ENCODE measurements at regions of chr11 and their contacts with region 1.

Region 1: GRCh38 chr11:47552566-47553416 is at the start of gene CELF1:
- DNase-seq: peak; percentile 91 to 92
- ATAC-seq: peak; percentile 98 to 100 (median 98)
- H3K4me3 ChIP-seq: peak within 1 kb of the TSS; percentile 83 to 99 (median 94)
- H3K27ac ChIP-seq: peak within 1 kb of the TSS; percentile 82 to 97 (median 94)
- H3K4me1 ChIP-seq: peaks cover 4 to 48% (median 42%) of the 10 kb centered on the region in 9 donors
- H3K27me3 ChIP-seq: no peaks in the 10 kb centered on the region
- CTCF ChIP-seq: peak; percentile 84 to 99 (median 94)
- total RNA-seq, gene CELF1: 68.3 to 97.0 (median 87.7) TPM

Region 2: DNA sequence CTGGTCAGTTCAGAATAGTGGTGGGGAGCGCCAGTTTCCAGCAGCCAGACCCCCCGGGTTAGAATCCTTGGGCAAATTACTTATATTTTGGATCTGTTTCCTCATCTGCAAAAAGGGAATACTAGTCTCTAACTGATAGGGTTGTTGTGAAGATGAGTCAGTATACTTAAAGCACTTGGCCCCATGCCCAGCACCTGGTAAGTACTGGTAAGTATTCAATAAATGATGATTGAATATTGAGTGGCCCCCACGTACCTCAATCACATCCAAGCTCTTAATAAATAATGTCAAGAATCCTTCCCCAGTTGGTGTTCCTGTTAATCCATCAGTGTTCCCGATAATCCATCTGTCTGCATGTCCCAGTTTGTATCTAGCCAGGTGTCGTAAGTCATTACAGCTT is 316.3 kb before region 1 on chr11:
- intact Hi-C with region 1: no loop called
- DNase-seq: no peak
- ATAC-seq: no peak
- H3K4me3 ChIP-seq: no peak overlapping the region
- H3K27ac ChIP-seq: no peak overlapping the region
- H3K4me1 ChIP-seq: peaks cover 5 to 38% (median 23%) of the 10 kb centered on the region in 9 donors
- H3K27me3 ChIP-seq: no peaks in the 10 kb centered on the region
- CTCF ChIP-seq: no peak

Region 3: DNA sequence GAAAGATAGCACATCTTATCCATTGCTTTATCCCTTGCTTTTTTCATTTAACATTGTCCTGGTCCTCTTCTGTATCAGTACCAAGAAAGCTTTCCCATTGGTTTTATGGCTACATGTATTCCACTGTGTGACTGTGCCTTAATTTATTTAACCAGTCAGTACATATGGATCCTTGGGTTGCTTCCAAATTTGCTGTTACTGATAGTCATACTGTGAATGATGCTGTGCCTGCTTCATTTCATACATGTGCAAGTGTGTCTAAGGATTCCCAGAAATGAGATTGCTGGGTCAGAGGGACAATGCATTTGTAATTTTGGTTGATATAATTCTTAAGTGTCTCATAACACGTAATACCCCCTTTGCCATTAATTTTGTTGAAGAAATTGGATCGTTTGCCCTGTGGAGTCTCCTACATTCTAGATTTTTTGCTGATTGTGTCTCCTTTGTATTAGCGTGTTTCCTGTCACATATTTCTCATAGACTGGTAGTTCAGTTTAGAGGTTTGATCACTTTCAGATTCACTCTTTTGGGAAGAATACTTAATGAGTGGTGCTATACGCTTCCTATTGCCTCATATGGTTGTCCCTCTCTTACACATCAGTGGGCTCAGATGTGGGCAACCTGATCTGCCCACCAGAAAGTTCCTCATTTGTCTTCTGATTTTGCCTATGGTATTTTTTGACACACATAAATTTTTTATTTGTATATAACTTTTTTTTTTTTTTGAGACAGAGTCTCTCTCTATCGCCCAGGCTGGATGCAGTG is 235.5 kb before region 1 on chr11:
- intact Hi-C with region 1: no loop called
- DNase-seq: no peak
- ATAC-seq: no peak
- H3K4me3 ChIP-seq: no peak overlapping the region
- H3K27ac ChIP-seq: no peak overlapping the region
- H3K4me1 ChIP-seq: peaks cover 0 to 3% (median 0%) of the 10 kb centered on the region in 9 donors
- H3K27me3 ChIP-seq: no peaks in the 10 kb centered on the region
- CTCF ChIP-seq: no peak

Region 4: DNA sequence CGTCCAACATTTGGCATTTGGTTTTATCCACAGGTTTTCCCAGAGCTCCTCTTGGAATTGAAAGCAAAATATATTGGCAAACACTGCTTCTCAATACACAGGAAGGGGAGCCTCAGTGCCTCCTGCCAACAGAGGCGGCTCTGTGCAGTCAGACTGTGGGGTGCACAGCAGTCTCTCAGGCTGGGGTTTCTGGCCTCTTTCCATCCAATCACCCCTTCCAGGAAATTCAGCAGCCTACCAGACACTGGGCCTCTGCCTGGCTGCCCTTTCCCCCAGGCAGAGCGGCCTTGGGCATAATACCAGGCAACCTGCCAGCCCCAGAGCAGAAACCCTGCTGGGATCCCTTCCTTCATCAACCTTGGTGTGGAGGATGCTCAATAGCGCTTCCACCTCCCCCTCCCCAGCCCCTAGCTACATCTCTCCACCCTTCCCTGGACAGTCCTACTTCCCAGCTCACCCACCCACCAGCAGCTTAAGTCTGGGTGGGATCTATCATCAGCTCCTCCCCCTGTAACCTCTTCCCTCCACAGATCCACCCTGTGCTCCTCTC is 86.0 kb before region 1 on chr11:
- intact Hi-C with region 1: loop called in 2 of 10 experiments (anchors 5 kb)
- DNase-seq: peak; percentile 37 to 45
- ATAC-seq: peak; percentile 50 to 74 (median 70)
- H3K4me3 ChIP-seq: peak overlapping the region in 1 of 10 donors; percentile 27
- H3K27ac ChIP-seq: peak overlapping the region in 9 of 10 donors; percentile 28 to 79 (median 62)
- H3K4me1 ChIP-seq: peaks cover 6 to 52% (median 35%) of the 10 kb centered on the region in 9 donors
- H3K27me3 ChIP-seq: no peaks in the 10 kb centered on the region
- CTCF ChIP-seq: no peak

Region 5: DNA sequence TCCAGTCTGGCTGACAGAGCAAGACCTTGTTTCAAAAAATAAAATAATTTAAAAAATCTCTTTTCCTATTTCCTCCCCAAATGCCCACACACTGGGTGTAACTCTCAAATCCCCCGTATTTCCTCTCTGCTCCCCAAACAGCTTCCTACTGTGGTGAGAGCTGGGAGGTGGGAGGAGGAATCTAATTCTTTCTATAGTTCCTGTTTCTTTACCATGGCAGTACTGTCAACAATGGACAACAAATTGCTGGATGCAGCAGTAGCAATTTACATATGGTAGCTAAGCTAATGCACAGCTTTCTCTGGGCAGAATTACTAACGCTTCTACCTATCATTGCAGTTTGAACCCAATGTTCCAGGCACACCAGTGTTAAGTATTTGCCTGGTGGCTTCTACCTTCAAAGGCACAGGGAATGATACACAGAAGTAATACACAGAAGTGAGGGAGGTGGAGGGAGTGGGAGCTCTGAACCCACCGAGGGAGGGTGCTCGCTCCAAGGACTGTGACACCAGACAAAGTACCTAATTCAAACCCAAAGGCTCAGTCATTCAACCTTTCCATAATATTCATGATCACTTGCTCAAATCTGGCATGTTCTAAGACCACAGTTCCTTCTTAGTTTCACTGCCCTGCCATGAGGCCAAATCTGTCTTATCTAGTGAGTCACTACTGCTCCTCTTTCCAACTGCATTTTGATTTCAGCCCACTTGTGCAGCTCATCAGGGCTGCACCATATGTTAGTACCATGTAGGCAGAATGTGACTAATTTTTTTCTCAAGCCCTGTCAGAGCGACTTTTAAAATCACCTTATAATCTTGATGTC is 37.8 kb before region 1 on chr11:
- intact Hi-C with region 1: loop called in 1 of 10 experiments (anchors 5 kb)
- DNase-seq: no peak
- ATAC-seq: peak; percentile 56 to 81 (median 67)
- H3K4me3 ChIP-seq: no peak overlapping the region
- H3K27ac ChIP-seq: peak overlapping the region in 9 of 10 donors; percentile 13 to 64 (median 38)
- H3K4me1 ChIP-seq: peaks cover 25 to 100% (median 86%) of the 10 kb centered on the region in 9 donors
- H3K27me3 ChIP-seq: no peaks in the 10 kb centered on the region
- CTCF ChIP-seq: no peak

Region 6: DNA sequence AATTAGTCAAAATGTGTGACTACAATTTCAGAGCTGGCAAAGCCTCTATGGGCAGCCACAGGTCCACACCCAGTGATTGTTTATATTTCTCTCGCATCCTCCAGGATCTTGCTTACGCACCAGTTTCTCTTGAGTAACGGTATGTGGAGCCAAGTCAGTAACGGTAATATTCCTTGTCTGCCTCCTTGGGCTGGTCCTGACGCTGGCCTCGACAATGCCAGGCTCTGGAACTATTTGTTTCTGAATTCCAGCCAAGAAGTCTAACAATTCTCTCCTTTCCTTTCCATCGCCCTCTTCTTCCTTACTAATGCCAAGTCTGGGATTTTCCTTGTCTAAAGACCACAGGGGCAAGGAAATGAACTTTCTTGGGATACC is 305.4 kb after region 1 on chr11:
- intact Hi-C with region 1: no loop called
- DNase-seq: no peak
- ATAC-seq: peak in 7 of 8 donors; percentile 36 to 76 (median 50)
- H3K4me3 ChIP-seq: no peak overlapping the region
- H3K27ac ChIP-seq: peak overlapping the region in 1 of 10 donors; percentile 9
- H3K4me1 ChIP-seq: peaks cover 0 to 30% (median 2%) of the 10 kb centered on the region in 9 donors
- H3K27me3 ChIP-seq: no peaks in the 10 kb centered on the region
- CTCF ChIP-seq: no peak